Mammary epithelial cell (primary cell): ENCODE measurements at regions of chr3 and their contacts with region 1.

Region 1: GRCh38 chr3:22887664-22888291 is 315.3 kb upstream of the UBE2E2 start:
- DNase-seq: peak; percentile 8
- H3K4me3 ChIP-seq: no peak overlapping the region
- H3K27ac ChIP-seq: no peak overlapping the region
- H3K4me1 ChIP-seq: no peaks in the 10 kb centered on the region
- H3K27me3 ChIP-seq: no peaks in the 10 kb centered on the region
- CTCF ChIP-seq: peak; percentile 73 to 81

Region 2: DNA sequence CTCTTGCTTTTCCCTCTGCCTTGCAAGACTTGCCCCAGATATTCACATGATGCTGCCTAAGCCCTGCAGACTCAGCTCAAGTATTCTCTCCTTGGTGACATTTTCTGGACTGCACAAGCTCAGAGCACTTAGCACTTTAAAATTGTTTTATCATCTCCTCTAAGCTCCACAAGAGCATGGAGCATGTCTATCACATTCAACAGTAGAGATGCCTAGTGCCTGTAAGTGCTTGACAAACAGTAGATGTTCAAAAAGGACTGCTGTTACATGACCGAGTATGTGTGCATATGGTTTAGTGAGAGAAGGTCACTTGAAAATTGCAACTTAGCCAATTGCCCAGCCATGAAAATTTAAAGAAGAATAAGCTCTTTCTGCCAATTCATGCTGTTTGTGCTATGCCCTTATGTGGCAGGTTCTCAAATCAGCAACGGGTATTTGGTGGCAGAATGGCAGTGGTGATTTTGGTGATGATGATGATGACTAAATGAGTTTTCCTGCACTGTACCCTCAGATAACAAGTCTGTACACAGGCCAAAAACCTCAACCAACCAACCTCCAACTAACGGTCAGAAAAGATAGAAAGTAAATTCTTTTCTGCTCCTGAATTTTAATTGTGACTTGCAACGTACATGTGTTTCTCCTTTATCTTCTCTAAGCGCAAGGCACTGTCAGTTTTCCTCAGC is 331.9 kb before region 1 on chr3:
- CTCF ChIA-PET with region 1: no interaction called
- dilution Hi-C with region 1: no loop called
- in situ Hi-C with region 1: loop called (anchors 10 to 25 kb)
- intact Hi-C with region 1: no loop called
- DNase-seq: no peak
- H3K4me3 ChIP-seq: no peak overlapping the region
- H3K27ac ChIP-seq: no peak overlapping the region
- H3K4me1 ChIP-seq: no peaks in the 10 kb centered on the region
- H3K27me3 ChIP-seq: peaks cover 4% of the 10 kb centered on the region
- CTCF ChIP-seq: no peak

Region 3: GRCh38 chr3:22729985-22730384 is 157.8 kb before region 1 on chr3:
- CTCF ChIA-PET with region 1: no interaction called
- dilution Hi-C with region 1: no loop called
- in situ Hi-C with region 1: no loop called
- intact Hi-C with region 1: loop called (anchors 1 kb)
- DNase-seq: peak; percentile 2
- H3K4me3 ChIP-seq: no peak overlapping the region
- H3K27ac ChIP-seq: no peak overlapping the region
- H3K4me1 ChIP-seq: peaks cover 11% of the 10 kb centered on the region
- H3K27me3 ChIP-seq: no peaks in the 10 kb centered on the region
- CTCF ChIP-seq: peak; percentile 23 to 59

Region 4: DNA sequence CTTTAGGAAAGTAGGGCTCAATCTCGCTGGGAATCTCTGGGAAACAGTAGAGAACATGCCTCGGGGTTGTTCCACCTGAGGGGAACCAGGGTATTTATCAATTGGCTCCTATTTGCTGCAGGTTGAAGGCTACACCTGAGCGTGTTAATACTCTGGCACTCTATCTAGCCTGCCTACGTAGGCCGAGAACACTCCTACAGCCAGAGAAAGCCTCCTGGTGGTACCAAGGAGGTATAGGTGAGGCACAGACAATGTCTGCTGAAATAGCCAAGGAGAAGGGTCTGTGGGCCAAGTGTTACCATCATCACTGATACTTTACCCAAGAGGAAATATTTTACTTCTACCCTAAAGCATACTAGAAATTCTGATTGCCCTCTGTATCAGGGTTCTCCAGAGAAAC is 25.7 kb before region 1 on chr3:
- CTCF ChIA-PET with region 1: no interaction called
- dilution Hi-C with region 1: no loop called
- in situ Hi-C with region 1: no loop called
- intact Hi-C with region 1: no loop called
- DNase-seq: no peak
- H3K4me3 ChIP-seq: no peak overlapping the region
- H3K27ac ChIP-seq: no peak overlapping the region
- H3K4me1 ChIP-seq: no peaks in the 10 kb centered on the region
- H3K27me3 ChIP-seq: no peaks in the 10 kb centered on the region
- CTCF ChIP-seq: no peak